ENCODE measurements at regions of chr1 and their contacts with region 1.

Region 1: GRCh38 chr1:241998412-241998921 is 431 bp downstream of the MAP1LC3C start:
- DNase-seq: peak in 1 of 2 experiments; percentile 85
- H3K4me3 ChIP-seq: peak overlapping the region; percentile 31 to 64 (median 60); a peak in 7 of 8 replicates
- H3K27ac ChIP-seq: no peak overlapping the region
- H3K4me1 ChIP-seq: peaks cover 3 to 7% (median 5%) of the 10 kb centered on the region in 4 experiments; a peak in 5 of 7 replicates
- H3K27me3 ChIP-seq: no peaks in the 10 kb centered on the region
- CTCF ChIP-seq: peak; percentile 83 to 90 (median 84)
- EP300 ChIP-seq: no peak
- POLR2A ChIP-seq: no peak
- RAD21 ChIP-seq: peak; percentile 56 to 61; a peak in 3 of 4 replicates

Region 2: GRCh38 chr1:241895013-241895412 is 103.5 kb before region 1 on chr1:
- CTCF ChIA-PET with region 1: interaction called, 83 read pairs
- POLR2A ChIA-PET with region 1: interaction called, 3 read pairs
- DNase-seq: no peak
- H3K4me3 ChIP-seq: no peak overlapping the region
- H3K27ac ChIP-seq: no peak overlapping the region
- H3K4me1 ChIP-seq: no peaks in the 10 kb centered on the region
- H3K27me3 ChIP-seq: no peaks in the 10 kb centered on the region
- CTCF ChIP-seq: no peak
- EP300 ChIP-seq: no peak
- POLR2A ChIP-seq: no peak
- RAD21 ChIP-seq: no peak

Region 3: GRCh38 chr1:241918879-241919278 is 79.6 kb before region 1 on chr1:
- CTCF ChIA-PET with region 1: interaction called, 12 read pairs
- POLR2A ChIA-PET with region 1: no interaction called
- DNase-seq: no peak
- H3K4me3 ChIP-seq: no peak overlapping the region
- H3K27ac ChIP-seq: no peak overlapping the region
- H3K4me1 ChIP-seq: no peaks in the 10 kb centered on the region
- H3K27me3 ChIP-seq: no peaks in the 10 kb centered on the region
- CTCF ChIP-seq: no peak
- EP300 ChIP-seq: no peak
- POLR2A ChIP-seq: no peak
- RAD21 ChIP-seq: no peak

Region 4: GRCh38 chr1:241972703-241973369 is 25.6 kb before region 1 on chr1:
- CTCF ChIA-PET with region 1: interaction called, 35 read pairs
- POLR2A ChIA-PET with region 1: no interaction called
- DNase-seq: no peak
- H3K4me3 ChIP-seq: no peak overlapping the region
- H3K27ac ChIP-seq: no peak overlapping the region
- H3K4me1 ChIP-seq: no peaks in the 10 kb centered on the region
- H3K27me3 ChIP-seq: no peaks in the 10 kb centered on the region
- CTCF ChIP-seq: no peak
- EP300 ChIP-seq: no peak
- POLR2A ChIP-seq: no peak
- RAD21 ChIP-seq: no peak

Region 5: GRCh38 chr1:241985787-241986186 is 12.7 kb before region 1 on chr1:
- CTCF ChIA-PET with region 1: interaction called, 71 read pairs
- POLR2A ChIA-PET with region 1: no interaction called
- DNase-seq: peak in 1 of 2 experiments; percentile 68
- H3K4me3 ChIP-seq: no peak overlapping the region
- H3K27ac ChIP-seq: no peak overlapping the region
- H3K4me1 ChIP-seq: no peaks in the 10 kb centered on the region
- H3K27me3 ChIP-seq: no peaks in the 10 kb centered on the region
- CTCF ChIP-seq: peak in 2 of 3 experiments; percentile 55 to 61; a peak in 3 of 4 replicates
- EP300 ChIP-seq: no peak
- POLR2A ChIP-seq: no peak
- RAD21 ChIP-seq: peak; percentile 50 to 62

Region 6: GRCh38 chr1:242017584-242018233 is 19.2 kb after region 1 on chr1:
- CTCF ChIA-PET with region 1: interaction called, 11 read pairs
- POLR2A ChIA-PET with region 1: no interaction called
- DNase-seq: peak in 1 of 2 experiments; percentile 61
- H3K4me3 ChIP-seq: no peak overlapping the region
- H3K27ac ChIP-seq: no peak overlapping the region
- H3K4me1 ChIP-seq: no peaks in the 10 kb centered on the region
- H3K27me3 ChIP-seq: no peaks in the 10 kb centered on the region
- CTCF ChIP-seq: peak; percentile 70 to 78 (median 74)
- EP300 ChIP-seq: no peak
- POLR2A ChIP-seq: no peak
- RAD21 ChIP-seq: peak; percentile 64 to 78